MCF 10A (cell line): ENCODE measurements at regions of chr4 and their contacts with region 1.

Region 1: GRCh38 chr4:184815046-184815877 is 10.5 kb downstream of the ACSL1 start:
- DNase-seq: peak; percentile 96
- H3K4me3 Mint-ChIP-seq: peak overlapping the region; percentile 87
- H3K27ac Mint-ChIP-seq: peak overlapping the region; percentile 95
- H3K4me1 Mint-ChIP-seq: peaks cover 76% of the 10 kb centered on the region
- H3K27me3 Mint-ChIP-seq: no peaks in the 10 kb centered on the region
- CTCF ChIP-seq: no peak

Region 2: DNA sequence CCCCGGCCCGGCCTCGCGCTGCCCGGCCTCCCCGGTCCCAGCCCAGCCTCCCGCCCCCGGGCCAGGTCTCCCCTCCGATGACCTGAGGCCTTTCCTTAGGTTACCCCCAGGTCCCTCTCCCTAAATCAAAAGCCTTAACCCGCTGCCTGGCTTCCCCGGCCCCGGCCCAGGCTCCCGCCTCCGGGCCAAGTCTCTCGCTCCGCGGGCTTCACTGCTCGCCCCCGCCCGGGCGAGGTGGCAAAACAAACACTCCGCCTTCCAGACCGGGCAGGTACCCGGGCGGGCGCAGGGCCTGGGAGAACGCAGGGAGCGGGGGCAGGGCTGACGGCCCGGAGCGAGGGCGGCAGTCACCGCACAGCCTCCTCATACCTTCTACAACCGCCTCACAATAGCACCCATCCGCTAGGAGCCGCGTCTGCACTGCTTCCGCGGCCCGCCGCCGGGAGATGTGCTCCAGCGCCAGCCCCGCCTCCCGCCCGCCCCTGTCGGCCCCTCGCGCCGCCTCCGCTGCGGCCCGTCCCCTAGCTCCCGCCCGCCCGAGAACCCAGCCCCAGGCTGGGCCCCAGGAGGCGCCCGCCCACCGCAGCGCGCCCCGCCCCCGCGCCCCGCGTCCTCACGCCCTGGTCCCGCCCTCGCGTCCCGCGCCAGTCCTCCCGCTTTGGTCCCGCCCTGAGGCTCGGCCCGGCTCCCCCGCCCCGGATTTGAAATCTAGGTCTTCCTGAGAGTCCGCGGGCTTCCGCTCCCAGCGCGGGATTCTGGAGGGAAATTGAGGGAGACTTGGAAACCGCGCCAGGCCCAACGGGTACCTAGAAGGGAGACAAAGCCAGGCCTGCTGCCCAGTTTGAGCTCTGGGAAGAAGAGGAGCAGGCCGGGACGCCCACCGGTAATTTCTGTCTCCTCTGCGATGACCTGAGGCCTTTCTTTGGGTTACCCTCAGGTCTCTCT is 166.0 kb before region 1 on chr4 and contains the starts of genes CASP3 and PRIMPOL:
- CTCF ChIA-PET with region 1: no interaction called
- POLR2A ChIA-PET with region 1: interaction called, 4 read pairs
- intact Hi-C with region 1: loop called (anchors 10 kb)
- DNase-seq: peak; percentile 94
- H3K4me3 Mint-ChIP-seq: peak within 1 kb of the TSS; percentile 81
- H3K27ac Mint-ChIP-seq: peak within 1 kb of the TSS; percentile 78
- H3K4me1 Mint-ChIP-seq: peaks cover 37% of the 10 kb centered on the region
- H3K27me3 Mint-ChIP-seq: no peaks in the 10 kb centered on the region
- CTCF ChIP-seq: no peak
- total RNA-seq, gene CASP3: 27.4 and 28.6 TPM in 2 replicates
- total RNA-seq, gene PRIMPOL: 19.2 and 20.7 TPM in 2 replicates

Region 3: GRCh38 chr4:184733654-184734524 is 81.4 kb before region 1 on chr4 and contains the start of gene CENPU:
- CTCF ChIA-PET with region 1: no interaction called
- POLR2A ChIA-PET with region 1: interaction called, 25 read pairs
- intact Hi-C with region 1: loop called (anchors 2 kb)
- DNase-seq: peak; percentile 98
- H3K4me3 Mint-ChIP-seq: peak within 1 kb of the TSS; percentile 87
- H3K27ac Mint-ChIP-seq: peak within 1 kb of the TSS; percentile 73
- H3K4me1 Mint-ChIP-seq: peaks cover 26% of the 10 kb centered on the region
- H3K27me3 Mint-ChIP-seq: no peaks in the 10 kb centered on the region
- CTCF ChIP-seq: no peak
- total RNA-seq, gene CENPU: 8.3 and 22.3 TPM in 2 replicates

Region 4: DNA sequence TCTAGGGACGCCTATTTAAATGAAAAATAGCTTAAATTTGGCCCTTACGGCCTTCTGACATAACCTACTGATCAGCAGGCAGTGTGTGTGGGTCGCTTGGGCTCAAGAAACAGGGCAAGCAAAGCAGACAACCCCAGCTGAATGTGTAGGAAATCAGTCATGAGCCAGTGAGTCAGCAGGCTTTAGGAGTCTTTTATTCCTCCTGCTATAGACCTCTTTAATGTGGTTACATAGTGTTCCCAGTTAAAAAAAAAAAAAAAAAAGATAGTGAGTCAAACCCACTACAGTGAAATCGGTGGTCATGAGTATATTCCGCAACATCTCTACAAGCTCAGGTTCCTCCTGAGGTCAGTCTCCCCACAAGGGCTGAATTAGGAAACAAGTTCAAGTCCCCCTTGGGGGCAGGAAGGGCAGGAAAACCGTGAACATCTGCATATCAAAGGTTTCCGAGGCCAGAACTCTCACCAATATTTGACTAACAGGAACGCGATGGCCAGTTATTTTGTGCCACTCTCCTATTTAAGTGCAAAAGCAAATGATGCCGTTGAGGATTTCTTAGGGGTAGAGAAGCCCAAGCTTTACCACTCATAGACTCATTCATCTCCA is 22.2 kb before region 1 on chr4:
- CTCF ChIA-PET with region 1: interaction called, 7 read pairs
- POLR2A ChIA-PET with region 1: interaction called, 33 read pairs
- intact Hi-C with region 1: loop called (anchors 1 kb)
- DNase-seq: peak; percentile 93
- H3K4me3 Mint-ChIP-seq: no peak overlapping the region
- H3K27ac Mint-ChIP-seq: peak overlapping the region; percentile 67
- H3K4me1 Mint-ChIP-seq: peaks cover 58% of the 10 kb centered on the region
- H3K27me3 Mint-ChIP-seq: no peaks in the 10 kb centered on the region
- CTCF ChIP-seq: no peak

Region 5: DNA sequence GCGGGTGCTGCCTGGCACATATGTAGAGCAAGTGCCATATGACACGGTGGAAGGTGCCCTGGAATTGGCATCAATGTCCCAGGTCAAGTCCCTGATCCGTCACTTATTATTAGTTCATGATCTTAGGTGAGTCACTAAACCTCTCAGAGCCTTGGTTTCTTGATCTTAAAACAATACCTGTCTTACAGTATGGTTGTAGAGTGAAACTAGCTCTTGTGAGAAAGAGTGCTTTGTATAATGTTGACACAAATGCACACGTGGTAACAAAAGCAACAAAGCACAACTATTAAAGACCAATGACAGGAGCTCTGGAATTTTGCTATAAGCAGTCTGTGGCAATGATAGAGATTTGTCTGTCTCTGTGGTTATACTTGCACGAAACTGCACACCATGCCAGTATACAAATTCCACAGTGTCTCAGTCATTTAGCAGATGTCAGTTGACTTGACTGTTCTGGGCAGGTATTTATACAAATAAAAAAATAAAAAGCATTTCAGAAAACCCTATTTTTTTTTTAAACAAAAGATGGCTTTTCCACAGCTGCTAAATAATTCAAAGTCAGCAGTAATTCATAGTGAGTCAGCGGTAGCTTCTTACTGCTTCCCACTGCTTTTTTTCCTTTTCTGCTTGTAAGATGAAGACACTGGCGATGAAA is 30.2 kb after region 1 on chr4:
- CTCF ChIA-PET with region 1: no interaction called
- POLR2A ChIA-PET with region 1: interaction called, 35 read pairs
- intact Hi-C with region 1: no loop called
- DNase-seq: peak; percentile 84
- H3K4me3 Mint-ChIP-seq: no peak overlapping the region
- H3K27ac Mint-ChIP-seq: peak overlapping the region; percentile 69
- H3K4me1 Mint-ChIP-seq: peaks cover 13% of the 10 kb centered on the region
- H3K27me3 Mint-ChIP-seq: no peaks in the 10 kb centered on the region
- CTCF ChIP-seq: no peak

Region 6: DNA sequence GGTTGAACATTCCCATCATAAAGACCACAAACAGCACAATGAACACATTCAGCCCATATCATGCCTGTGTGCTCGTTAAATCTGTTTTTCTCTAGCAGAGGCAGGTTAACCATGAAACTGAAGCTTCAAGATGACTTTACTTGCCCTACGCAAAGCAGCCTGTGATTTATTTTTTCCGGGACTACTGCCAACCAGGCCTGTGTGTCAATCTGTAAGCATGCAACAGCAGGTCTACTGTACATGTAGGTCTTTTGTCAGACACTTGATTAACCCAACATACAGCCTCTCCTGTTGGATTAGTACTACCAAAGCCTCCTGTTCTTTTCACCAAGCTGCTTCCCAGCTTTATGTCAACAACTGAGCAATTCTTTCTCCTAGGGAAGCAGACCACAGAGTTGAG is 96.0 kb after region 1 on chr4:
- CTCF ChIA-PET with region 1: no interaction called
- POLR2A ChIA-PET with region 1: interaction called, 19 read pairs
- intact Hi-C with region 1: no loop called
- DNase-seq: peak; percentile 93
- H3K4me3 Mint-ChIP-seq: no peak overlapping the region
- H3K27ac Mint-ChIP-seq: no peak overlapping the region
- H3K4me1 Mint-ChIP-seq: peaks cover 28% of the 10 kb centered on the region
- H3K27me3 Mint-ChIP-seq: no peaks in the 10 kb centered on the region
- CTCF ChIP-seq: no peak